HEK293 (cell line): ENCODE measurements at regions of chr9 and their contacts with region 1.

Region 1: GRCh38 chr9:95127249-95128176 is 190.0 kb downstream of the FANCC start:
- H3K4me3 ChIP-seq: no peak overlapping the region
- H3K27ac ChIP-seq: no peak overlapping the region
- H3K4me1 ChIP-seq: 0 out of 2 replicates have a peak, but pooled peaks cover 9% of the 10 kb centered on the region
- CTCF ChIP-seq: peak; percentile 85

Region 2: DNA sequence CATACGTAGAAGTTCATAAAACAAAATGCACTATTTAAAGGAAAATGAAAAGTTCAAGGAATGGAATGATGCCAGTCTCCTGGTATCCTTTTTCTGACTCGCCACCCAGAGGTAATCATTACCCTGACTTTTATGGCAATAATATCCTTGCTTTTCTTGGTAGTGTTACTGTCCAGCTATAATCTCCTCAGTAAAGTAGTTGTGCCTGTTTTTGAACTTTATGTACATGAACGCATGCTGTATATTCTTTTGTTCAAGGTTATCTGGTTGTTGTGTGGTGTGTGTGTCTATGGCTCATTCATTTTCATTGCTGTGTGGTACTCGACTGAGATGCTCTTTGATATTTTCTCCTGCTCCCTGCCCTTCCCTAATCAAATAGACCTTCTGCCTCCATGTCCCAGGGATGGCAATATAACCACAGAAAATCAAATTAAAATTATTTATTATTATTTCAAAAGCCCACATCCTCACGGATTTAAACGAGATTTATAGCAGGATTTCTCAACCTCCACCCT is 459.0 kb before region 1 on chr9:
- CTCF ChIA-PET with region 1: interaction called, 90 read pairs
- POLR2A ChIA-PET with region 1: no interaction called
- H3K4me3 ChIP-seq: no peak overlapping the region
- H3K27ac ChIP-seq: no peak overlapping the region
- H3K4me1 ChIP-seq: no peaks in the 10 kb centered on the region
- CTCF ChIP-seq: no peak

Region 3: GRCh38 chr9:94783102-94783664 is 344.3 kb before region 1 on chr9:
- CTCF ChIA-PET with region 1: interaction called, 123 read pairs
- POLR2A ChIA-PET with region 1: no interaction called
- H3K4me3 ChIP-seq: no peak overlapping the region
- H3K27ac ChIP-seq: no peak overlapping the region
- H3K4me1 ChIP-seq: no peaks in the 10 kb centered on the region
- CTCF ChIP-seq: peak; percentile 49

Region 4: DNA sequence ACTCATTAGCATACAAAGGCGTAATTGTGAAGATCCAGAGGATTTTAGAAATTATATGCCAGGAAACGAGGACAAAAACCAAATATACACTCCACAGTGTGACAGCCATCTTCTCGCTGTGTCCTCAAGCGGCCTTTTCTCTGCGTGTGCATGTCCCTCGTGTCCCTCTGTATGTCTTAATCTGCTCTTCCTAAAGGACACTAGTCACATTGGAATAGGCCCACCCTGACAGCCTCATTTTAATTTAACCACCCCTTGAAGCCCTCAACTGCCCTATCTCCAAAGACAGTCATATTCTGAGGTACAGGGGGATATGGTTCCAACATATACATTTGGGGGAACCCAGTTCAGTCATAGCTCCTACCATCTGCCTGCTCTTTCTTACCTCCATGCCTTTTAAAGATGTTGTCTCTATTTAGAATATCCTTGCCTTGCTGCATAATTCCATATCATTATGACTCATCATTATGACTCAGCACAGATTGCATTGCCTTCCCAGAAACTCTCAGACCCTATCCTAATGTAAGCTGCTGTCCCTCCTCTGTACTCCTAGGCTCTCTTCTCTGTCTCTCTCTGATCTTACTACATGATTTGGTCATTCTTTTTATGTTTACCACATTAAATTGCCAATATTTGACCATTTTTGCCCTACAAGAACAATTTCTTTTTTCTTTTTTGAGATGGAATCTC is 190.2 kb before region 1 on chr9:
- CTCF ChIA-PET with region 1: no interaction called
- POLR2A ChIA-PET with region 1: no interaction called
- H3K4me3 ChIP-seq: no peak overlapping the region
- H3K27ac ChIP-seq: no peak overlapping the region
- H3K4me1 ChIP-seq: no peaks in the 10 kb centered on the region
- CTCF ChIP-seq: no peak

Region 5: GRCh38 chr9:95116003-95116807 is 11.3 kb before region 1 on chr9:
- CTCF ChIA-PET with region 1: interaction called, 92 read pairs
- POLR2A ChIA-PET with region 1: no interaction called
- H3K4me3 ChIP-seq: no peak overlapping the region
- H3K27ac ChIP-seq: no peak overlapping the region
- H3K4me1 ChIP-seq: no peaks in the 10 kb centered on the region
- CTCF ChIP-seq: no peak

Region 6: DNA sequence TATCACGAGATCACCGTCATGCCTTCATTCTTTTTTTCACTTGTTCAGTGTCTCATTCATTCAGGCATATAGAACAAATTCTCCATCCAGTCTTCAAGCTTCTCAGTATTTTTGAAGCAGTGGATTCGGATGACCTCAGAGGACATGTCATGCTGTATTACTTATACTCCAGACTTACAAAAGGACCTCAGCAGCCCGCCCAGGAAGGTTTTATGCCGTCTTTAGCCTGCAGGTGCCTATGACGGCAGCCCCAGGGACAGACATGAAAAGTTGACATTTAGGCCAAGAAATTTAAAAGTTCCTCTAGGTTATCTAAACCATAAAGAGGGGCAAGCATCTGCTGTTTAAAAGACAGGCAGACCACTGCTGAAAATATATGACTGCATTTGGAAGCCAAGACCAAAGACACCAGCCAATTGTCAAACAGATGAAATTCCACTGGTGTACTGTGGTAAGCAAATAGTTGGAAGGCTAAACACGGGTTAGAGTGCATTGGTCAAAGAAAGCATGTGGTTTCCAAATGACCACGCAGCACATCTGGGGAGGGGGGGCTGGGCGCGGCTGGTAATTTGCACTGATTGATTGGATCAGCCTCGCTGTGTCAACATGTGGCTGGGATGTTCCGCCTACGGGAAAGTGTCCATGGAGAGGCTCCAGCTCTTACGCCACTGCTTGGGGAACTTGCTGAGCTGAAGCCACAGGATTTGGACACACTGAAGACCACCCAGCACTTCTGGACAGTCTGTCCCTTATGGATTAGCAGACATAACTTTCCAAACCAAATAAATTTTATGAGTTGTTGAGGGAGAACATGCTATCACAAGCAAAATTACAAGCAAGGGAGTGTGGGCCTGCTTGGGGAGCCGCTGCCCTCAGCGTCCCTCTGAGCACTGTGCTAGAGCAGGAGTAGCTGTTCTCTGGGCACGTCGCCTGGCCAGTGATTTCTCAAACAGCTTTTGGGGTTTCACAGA is 16.4 kb after region 1 on chr9:
- CTCF ChIA-PET with region 1: interaction called, 21 read pairs
- POLR2A ChIA-PET with region 1: no interaction called
- H3K4me3 ChIP-seq: no peak overlapping the region
- H3K27ac ChIP-seq: no peak overlapping the region
- H3K4me1 ChIP-seq: no peaks in the 10 kb centered on the region
- CTCF ChIP-seq: no peak

Region 7: DNA sequence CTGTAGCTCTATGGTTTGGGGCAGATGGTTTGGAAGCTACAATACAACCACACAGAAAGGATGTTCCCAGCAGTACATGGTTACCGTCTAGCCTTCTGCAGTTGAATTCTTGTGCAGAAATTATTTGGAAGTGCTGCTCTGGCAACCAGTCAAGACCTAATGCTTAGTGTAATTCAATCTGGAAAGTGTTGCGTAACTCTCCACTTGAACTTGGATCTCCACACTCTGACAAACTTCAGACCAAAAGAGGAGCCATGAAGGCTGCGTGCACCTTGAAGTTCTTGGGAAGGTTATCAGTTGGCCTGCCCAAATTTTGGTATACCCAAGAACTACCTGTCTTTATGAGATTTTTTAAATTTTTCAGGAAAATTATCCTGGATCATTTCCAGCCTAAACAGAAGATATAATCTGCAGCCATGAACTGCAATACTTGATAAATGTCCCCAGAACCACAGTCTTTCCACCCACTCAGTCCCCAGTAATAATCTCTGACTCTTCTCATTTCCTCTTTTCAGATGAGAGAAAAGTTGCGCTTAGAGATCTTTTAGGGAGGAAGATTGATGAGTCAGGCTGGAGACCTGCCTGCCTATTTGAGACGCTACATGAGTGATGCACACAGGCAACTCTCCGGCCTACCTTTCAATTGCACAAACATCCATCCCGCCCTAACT is 30.1 kb after region 1 on chr9:
- CTCF ChIA-PET with region 1: interaction called, 15 read pairs
- POLR2A ChIA-PET with region 1: no interaction called
- H3K4me3 ChIP-seq: no peak overlapping the region
- H3K27ac ChIP-seq: no peak overlapping the region
- H3K4me1 ChIP-seq: peaks cover 3% of the 10 kb centered on the region; the same call in 1 of the 2 replicates
- CTCF ChIP-seq: no peak

Region 8: DNA sequence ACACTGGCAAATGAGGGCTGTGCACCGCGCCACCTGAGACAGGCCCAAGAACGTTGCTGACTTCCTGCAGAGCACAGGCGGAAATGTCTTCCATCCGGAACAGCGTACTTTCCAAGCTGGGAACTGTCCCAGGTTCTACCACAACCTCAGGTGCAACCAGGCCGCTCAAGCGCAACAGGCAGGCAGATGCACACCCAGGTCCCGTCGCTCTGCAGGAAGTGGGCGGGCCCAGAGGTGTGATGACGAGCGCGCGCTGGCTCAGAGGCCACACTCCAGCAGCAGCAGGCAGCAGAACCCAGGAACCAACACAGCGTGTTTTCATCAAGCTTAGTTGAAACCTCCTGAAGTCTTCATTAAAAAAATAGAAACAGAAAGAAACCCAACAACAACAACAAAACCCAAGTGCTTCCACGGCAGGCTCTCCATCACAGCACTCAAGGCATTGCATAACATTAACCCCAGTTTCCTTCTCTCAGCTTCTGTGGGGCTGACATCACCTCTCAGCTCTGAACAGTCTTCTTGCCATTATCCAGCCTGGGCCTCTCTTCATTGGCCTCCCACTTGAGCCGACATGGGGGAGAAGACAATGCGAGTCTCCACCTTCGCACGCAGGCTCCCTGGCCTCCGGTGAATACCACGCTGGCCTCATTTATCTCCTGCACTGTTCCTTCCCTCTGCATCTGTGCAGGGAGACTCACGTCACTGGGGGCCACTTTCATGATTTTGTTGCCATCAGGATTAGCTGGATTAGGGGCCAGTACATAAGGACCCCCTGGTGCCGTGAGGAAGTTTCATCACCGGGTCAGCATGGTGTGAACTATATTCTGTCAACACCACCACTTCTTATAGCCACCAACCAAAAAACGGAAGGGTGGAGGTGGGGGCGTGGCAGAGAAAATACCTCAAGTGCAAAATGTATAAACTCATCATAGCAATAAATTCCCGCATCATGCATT is 367.2 kb after region 1 on chr9:
- CTCF ChIA-PET with region 1: no interaction called
- POLR2A ChIA-PET with region 1: no interaction called
- H3K4me3 ChIP-seq: no peak overlapping the region
- H3K27ac ChIP-seq: no peak overlapping the region
- H3K4me1 ChIP-seq: no peaks in the 10 kb centered on the region
- CTCF ChIP-seq: no peak